Naive thymus-derived CD8-positive, alpha-beta T cell (primary cell): ENCODE measurements at regions of chrX and their contacts with region 1.

Region 1: DNA sequence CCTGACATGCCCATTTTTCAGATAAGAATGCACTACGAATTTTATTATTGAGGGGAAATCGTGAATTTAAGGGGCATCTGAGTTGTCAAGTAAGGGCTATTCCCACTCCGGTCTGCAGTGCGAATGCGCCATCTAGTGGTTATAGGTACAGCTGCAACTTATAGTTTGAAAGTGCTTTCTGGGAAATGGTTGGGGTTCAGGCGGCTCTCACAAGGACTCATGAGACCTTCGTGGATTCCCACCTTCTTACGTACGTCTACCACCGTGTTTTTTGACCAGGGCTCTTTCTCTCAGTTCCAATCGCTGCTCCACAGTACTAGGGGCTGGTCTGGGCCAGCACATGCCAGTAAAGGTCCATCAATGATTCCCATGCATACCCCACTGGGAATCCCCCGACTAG is 12.3 kb downstream of the MSL3 start:
- DNase-seq: peak in 8 of 10 donors; percentile 18 to 76 (median 65)
- ATAC-seq: peak; percentile 53 to 64
- H3K4me3 Mint-ChIP-seq: no peak overlapping the region
- H3K27ac Mint-ChIP-seq: peak overlapping the region; percentile 55 to 93 (median 84)
- H3K4me1 Mint-ChIP-seq: peaks cover 7 to 49% (median 39%) of the 10 kb centered on the region in 4 donors
- H3K27me3 Mint-ChIP-seq: no peaks in the 10 kb centered on the region

Region 2: DNA sequence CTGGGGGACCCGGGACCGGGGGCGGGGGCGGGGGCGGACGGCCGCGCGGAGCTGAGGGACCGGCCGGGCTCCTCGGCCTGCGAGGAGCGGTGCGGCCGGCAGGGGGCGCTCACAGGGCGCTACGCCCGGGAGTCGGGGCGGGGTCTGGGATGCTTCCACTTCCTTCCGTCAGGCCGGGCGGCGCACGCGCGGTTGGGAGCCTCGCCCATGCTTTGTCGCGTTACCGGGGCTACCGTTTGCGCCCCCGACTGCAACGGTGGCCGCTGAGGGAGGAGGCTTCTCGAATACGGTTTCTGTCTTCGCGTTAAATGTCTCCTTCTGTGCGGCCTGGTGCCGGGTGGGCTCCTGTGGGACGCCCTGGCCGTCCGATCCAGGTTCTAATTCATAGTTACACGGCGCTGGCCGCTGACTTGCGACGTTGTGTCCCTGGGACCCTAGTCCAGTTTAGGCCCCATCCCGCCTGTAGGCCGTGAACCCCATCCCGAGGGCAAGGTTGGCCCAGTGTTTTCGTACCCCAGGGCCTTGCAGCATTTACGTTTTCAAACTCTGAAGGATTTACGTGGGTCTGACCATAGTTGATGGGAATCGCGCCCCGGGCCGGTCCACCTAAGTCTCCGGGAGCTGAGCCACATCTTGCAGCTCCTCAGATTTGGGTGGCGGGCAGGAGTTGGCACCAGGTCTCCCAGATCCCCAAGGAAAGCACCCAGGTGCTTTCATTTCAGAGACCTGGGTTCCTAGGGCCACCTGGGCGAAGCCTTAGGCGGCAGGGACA is 11.7 kb before region 1 on chrX:
- POLR2A ChIA-PET with region 1: interaction called, 29 read pairs
- DNase-seq: peak; percentile 82 to 95 (median 88)
- ATAC-seq: peak; percentile 48 to 60
- H3K4me3 Mint-ChIP-seq: peak overlapping the region; percentile 85 to 98 (median 94)
- H3K27ac Mint-ChIP-seq: peak overlapping the region; percentile 84 to 99 (median 98)
- H3K4me1 Mint-ChIP-seq: peaks cover 10 to 22% (median 19%) of the 10 kb centered on the region in 4 donors
- H3K27me3 Mint-ChIP-seq: no peaks in the 10 kb centered on the region